ENCODE measurements at regions of chr10 and their contacts with region 1.

Region 1: DNA sequence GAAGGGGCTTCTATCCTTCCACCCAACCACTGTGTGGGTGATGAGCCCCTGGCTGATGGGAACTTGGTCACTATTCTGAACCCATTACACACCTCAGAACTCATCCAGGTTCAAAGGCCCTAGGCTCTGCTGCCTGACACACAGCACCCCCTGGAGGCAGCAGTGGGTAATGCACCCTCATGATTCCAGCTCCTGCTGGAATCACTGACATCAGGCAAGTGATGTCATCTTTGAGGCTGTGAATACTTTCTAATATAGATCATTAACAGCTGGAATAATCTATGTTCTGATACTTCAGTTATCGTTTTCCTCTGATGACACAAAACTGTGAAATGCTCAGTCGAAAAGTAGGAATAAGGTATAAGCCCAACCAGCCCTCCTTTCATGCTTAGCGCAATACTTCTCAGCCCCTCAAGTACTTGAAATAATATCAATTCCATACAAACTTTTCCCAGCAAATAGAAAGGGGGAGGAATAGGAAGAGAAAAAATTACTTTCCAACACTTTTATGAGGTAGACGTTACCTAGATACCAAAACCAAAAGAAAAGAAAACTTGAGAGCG is 7.5 kb upstream of the RBP3 start:
- DNase-seq: peak; percentile 47
- H3K4me3 ChIP-seq: no peak overlapping the region
- H3K27ac ChIP-seq: no peak overlapping the region
- H3K4me1 ChIP-seq: no peaks in the 10 kb centered on the region
- H3K27me3 ChIP-seq: no peaks in the 10 kb centered on the region
- CTCF ChIP-seq: peak; percentile 90 to 99

Region 2: GRCh38 chr10:47024399-47025252 is 316.1 kb before region 1 on chr10:
- CTCF ChIA-PET with region 1: no interaction called
- dilution Hi-C with region 1: no loop called
- in situ Hi-C with region 1: no loop called
- intact Hi-C with region 1: loop called (anchors 1 kb)
- DNase-seq: peak; percentile 42
- H3K4me3 ChIP-seq: no peak overlapping the region
- H3K27ac ChIP-seq: no peak overlapping the region
- H3K4me1 ChIP-seq: no peaks in the 10 kb centered on the region
- H3K27me3 ChIP-seq: no peaks in the 10 kb centered on the region
- CTCF ChIP-seq: peak; percentile 93 to 97

Region 3: GRCh38 chr10:47257396-47258120 is 83.1 kb before region 1 on chr10:
- CTCF ChIA-PET with region 1: no interaction called
- dilution Hi-C with region 1: no loop called
- in situ Hi-C with region 1: no loop called
- intact Hi-C with region 1: no loop called
- DNase-seq: peak; percentile 54
- H3K4me3 ChIP-seq: no peak overlapping the region
- H3K27ac ChIP-seq: no peak overlapping the region
- H3K4me1 ChIP-seq: no peaks in the 10 kb centered on the region
- H3K27me3 ChIP-seq: peaks cover 2% of the 10 kb centered on the region
- CTCF ChIP-seq: no peak

Region 4: DNA sequence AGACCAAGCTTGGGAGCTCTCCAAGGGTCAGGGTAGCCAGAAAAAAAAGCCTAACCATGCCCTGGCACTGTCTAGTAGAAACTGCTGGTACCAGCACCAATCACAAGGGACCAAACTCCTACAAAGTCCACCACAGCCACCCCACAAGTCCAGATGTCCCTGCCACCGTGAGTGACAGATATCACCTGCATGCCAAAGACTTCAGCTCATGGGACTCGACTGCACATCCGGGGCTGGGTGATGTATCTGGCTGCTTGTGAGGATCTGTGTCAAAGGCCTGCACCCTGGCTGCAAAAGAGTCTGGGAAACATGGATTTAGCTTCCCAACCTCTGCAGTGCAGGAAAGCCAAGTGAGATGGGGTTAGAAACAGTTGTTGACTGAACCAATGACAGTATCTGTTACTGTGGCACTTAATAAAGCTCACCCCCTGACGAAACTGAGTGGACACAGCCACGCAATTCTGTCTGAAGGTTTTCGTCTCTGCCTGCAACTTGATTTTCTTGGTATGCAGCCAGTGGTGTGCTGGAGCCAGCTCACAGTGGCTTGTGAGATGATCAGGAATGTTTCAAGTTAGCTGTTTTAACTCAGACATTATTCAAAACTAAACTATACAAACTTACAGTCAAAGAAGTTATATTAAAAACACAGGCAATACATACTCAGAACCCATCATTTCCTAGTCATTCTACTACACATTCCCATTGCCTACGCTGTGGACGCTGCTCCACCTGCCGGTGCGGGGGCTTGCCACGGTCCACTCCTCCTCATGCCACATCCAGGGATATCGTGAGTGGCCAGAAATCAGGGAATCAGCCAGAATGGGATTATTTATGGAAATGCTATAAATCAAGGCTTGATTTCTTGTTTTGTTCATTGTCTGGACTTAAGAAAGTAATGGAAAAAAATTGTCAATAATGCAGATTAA is 34.2 kb after region 1 on chr10:
- CTCF ChIA-PET with region 1: no interaction called
- dilution Hi-C with region 1: no loop called
- in situ Hi-C with region 1: no loop called
- intact Hi-C with region 1: no loop called
- DNase-seq: no peak
- H3K4me3 ChIP-seq: no peak overlapping the region
- H3K27ac ChIP-seq: no peak overlapping the region
- H3K4me1 ChIP-seq: no peaks in the 10 kb centered on the region
- H3K27me3 ChIP-seq: no peaks in the 10 kb centered on the region
- CTCF ChIP-seq: no peak